Ovary (tissue), 10 donors: ENCODE measurements at regions of chr10 and their contacts with region 1.

Region 1: DNA sequence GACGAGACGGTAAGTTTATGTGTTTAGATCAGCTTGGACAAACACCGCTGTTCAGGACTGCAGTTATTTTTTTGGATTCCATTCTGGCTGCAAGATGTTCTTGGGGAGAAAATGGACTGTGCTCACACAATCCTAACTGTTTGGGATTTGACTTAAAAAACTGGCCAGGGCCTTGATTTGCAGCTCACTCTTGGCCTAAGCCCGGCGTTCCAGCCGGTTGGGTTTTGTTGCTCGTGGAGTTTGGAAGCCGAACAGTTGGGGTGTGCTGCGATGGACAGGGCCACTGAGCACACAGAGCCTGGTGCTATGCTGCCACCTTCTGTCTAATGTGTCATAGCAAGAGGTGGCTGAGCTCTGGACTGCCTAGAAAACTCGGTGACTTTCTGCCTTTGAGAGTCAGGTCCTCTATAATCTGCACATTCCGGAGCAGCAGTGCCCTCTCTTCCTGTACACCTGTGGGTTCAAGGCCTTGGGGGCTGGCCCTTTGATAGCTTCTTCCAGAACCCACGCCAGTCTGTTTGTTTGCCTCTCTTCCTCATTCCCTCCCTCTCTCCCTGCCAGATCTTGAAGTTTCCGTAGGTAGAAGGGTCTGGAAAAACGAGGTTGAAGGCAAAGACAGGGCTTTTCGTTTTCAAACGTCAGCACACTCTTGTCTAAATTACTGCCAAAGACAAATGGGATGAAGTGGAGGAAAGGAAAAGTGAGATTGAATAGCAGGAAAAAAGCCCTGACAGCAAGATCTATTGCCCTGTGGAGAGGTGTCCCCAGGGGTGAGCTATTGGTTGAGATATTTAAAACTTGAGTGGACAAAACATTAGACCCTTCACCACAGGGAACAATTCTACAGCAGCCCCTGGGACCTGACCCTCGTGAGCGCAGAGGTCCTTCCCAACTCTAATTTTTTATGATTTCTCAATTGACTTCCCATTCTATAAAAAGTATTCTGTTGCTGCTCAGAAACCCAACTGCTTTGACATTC is 167.5 kb upstream of the HABP2 start:
- DNase-seq: peak; percentile 87 to 90 (median 89)
- H3K4me3 ChIP-seq: no peak overlapping the region
- H3K27ac ChIP-seq: peak overlapping the region in 1 of 2 donors; percentile 46
- H3K4me1 ChIP-seq: peaks cover 8% of the 10 kb centered on the region
- H3K27me3 ChIP-seq: no peaks in the 10 kb centered on the region
- CTCF ChIP-seq: peak; percentile 73 to 86 (median 79)
- EP300 ChIP-seq: no peak
- POLR2A ChIP-seq: no peak

Region 2: GRCh38 chr10:112471878-112472487 is 913.3 kb before region 1 on chr10:
- intact Hi-C with region 1: loop called in 1 of 4 experiments (anchors 10 kb)
- DNase-seq: no peak
- H3K4me3 ChIP-seq: no peak overlapping the region
- H3K27ac ChIP-seq: no peak overlapping the region
- H3K4me1 ChIP-seq: no peaks in the 10 kb centered on the region
- H3K27me3 ChIP-seq: no peaks in the 10 kb centered on the region
- CTCF ChIP-seq: peak; percentile 42 to 64 (median 50)
- EP300 ChIP-seq: no peak
- POLR2A ChIP-seq: no peak

Region 3: DNA sequence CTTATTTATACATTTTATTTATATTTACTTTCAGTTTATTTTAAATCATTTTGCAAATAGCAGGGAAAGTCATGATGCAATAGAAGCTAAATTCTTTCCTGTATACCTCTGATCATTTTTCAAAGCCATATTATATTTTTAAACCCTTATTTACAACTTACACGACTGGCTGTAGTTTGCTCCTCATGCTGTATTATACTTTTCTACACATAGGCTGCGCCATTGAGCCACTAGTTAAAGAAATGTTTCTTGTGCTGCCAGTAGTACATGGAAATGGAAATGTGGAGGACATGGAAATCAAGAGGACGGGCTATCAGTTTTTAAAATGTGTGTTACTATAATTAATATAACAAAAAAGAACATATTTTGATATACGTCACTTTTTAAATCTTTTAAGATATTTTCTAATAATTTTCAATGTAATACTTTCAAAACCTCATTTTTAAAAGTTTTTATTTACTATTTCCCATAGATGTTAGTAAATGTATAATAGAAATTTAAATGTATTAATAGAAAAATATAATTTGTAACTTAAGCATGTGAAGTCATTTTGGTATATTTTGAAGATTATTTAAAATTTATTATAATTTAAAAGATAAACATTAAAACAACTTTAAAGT is 819.8 kb before region 1 on chr10:
- intact Hi-C with region 1: loop called in 1 of 4 experiments (anchors 5 kb)
- DNase-seq: peak in 1 of 5 donors; percentile 19
- H3K4me3 ChIP-seq: no peak overlapping the region
- H3K27ac ChIP-seq: no peak overlapping the region
- H3K4me1 ChIP-seq: no peaks in the 10 kb centered on the region
- H3K27me3 ChIP-seq: no peaks in the 10 kb centered on the region
- CTCF ChIP-seq: peak in 1 of 3 donors; percentile 32
- EP300 ChIP-seq: no peak
- POLR2A ChIP-seq: no peak

Region 4: GRCh38 chr10:112721080-112721698 is 664.1 kb before region 1 on chr10:
- intact Hi-C with region 1: loop called in 1 of 4 experiments (anchors 10 kb)
- DNase-seq: no peak
- H3K4me3 ChIP-seq: no peak overlapping the region
- H3K27ac ChIP-seq: no peak overlapping the region
- H3K4me1 ChIP-seq: peaks cover 2% of the 10 kb centered on the region
- H3K27me3 ChIP-seq: no peaks in the 10 kb centered on the region
- CTCF ChIP-seq: peak; percentile 19 to 64 (median 26)
- EP300 ChIP-seq: no peak
- POLR2A ChIP-seq: no peak

Region 5: GRCh38 chr10:112949875-112950507 is 435.3 kb before region 1 on chr10 and contains the start of gene TCF7L2:
- intact Hi-C with region 1: loop called in 1 of 4 experiments (anchors 10 kb)
- DNase-seq: peak; percentile 94 to 97 (median 96)
- H3K4me3 ChIP-seq: peak within 1 kb of the TSS; percentile 58
- H3K27ac ChIP-seq: peak within 1 kb of the TSS; percentile 93 to 98
- H3K4me1 ChIP-seq: peaks cover 7% of the 10 kb centered on the region
- H3K27me3 ChIP-seq: no peaks in the 10 kb centered on the region
- CTCF ChIP-seq: no peak
- EP300 ChIP-seq: no peak
- POLR2A ChIP-seq: peak; percentile 56
- total RNA-seq, gene TCF7L2: 21.1 to 39.2 (median 34.5) TPM

Region 6: GRCh38 chr10:113139699-113140098 is 245.6 kb before region 1 on chr10:
- intact Hi-C with region 1: loop called in 1 of 4 experiments (anchors 10 kb)
- DNase-seq: no peak
- H3K4me3 ChIP-seq: no peak overlapping the region
- H3K27ac ChIP-seq: no peak overlapping the region
- H3K4me1 ChIP-seq: peaks cover 5% of the 10 kb centered on the region
- H3K27me3 ChIP-seq: no peaks in the 10 kb centered on the region
- CTCF ChIP-seq: no peak
- EP300 ChIP-seq: no peak
- POLR2A ChIP-seq: no peak

Region 7: GRCh38 chr10:113151190-113151666 is 234.1 kb before region 1 on chr10:
- intact Hi-C with region 1: loop called in 2 of 4 experiments (anchors 10 kb)
- DNase-seq: no peak
- H3K4me3 ChIP-seq: no peak overlapping the region
- H3K27ac ChIP-seq: no peak overlapping the region
- H3K4me1 ChIP-seq: no peaks in the 10 kb centered on the region
- H3K27me3 ChIP-seq: no peaks in the 10 kb centered on the region
- CTCF ChIP-seq: no peak
- EP300 ChIP-seq: no peak
- POLR2A ChIP-seq: no peak

Region 8: GRCh38 chr10:113399065-113399464 is 13.8 kb after region 1 on chr10:
- intact Hi-C with region 1: no loop called
- DNase-seq: no peak
- H3K4me3 ChIP-seq: no peak overlapping the region
- H3K27ac ChIP-seq: no peak overlapping the region
- H3K4me1 ChIP-seq: no peaks in the 10 kb centered on the region
- H3K27me3 ChIP-seq: no peaks in the 10 kb centered on the region
- CTCF ChIP-seq: no peak
- EP300 ChIP-seq: no peak
- POLR2A ChIP-seq: no peak